PC-9 (cell line): ENCODE measurements at regions of chr7 and their contacts with region 1.

Region 1: DNA sequence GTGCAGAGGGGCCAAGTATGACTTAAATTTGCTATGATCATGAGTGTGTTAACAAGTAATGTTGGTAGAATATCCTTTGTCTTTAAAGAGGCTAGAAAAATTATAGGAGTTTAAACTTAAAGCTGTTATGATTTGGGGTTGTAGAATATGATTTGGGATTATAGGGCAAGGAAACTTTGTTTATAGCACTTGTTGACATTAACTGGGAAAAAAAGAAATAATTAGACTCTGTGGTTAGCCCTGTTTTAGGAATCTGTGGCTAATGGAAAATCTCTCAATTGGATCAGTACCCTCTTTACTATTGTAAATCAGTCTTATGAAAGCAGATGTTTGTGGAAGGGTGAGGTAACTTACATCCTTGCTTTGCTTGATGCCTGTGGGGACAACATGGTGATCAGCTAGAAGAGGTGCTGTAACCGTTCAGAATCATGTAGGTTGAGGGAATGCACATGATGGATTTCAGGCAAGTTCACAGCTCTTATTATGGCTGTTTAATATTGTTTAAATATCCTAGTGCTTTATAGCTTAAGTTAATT is 11.1 kb downstream of the ING3 start:
- DNase-seq: no peak
- H3K4me3 ChIP-seq: no peak overlapping the region
- H3K27ac ChIP-seq: no peak overlapping the region
- H3K4me1 ChIP-seq: no peaks in the 10 kb centered on the region
- H3K27me3 ChIP-seq: no peaks in the 10 kb centered on the region
- CTCF ChIP-seq: no peak

Region 2: GRCh38 chr7:120014920-120015465 is 946.7 kb before region 1 on chr7:
- CTCF ChIA-PET with region 1: no interaction called
- POLR2A ChIA-PET with region 1: no interaction called
- intact Hi-C with region 1: no loop called
- DNase-seq: no peak
- H3K4me3 ChIP-seq: no peak overlapping the region
- H3K27ac ChIP-seq: no peak overlapping the region
- H3K4me1 ChIP-seq: no peaks in the 10 kb centered on the region
- H3K27me3 ChIP-seq: no peaks in the 10 kb centered on the region
- CTCF ChIP-seq: no peak

Region 3: DNA sequence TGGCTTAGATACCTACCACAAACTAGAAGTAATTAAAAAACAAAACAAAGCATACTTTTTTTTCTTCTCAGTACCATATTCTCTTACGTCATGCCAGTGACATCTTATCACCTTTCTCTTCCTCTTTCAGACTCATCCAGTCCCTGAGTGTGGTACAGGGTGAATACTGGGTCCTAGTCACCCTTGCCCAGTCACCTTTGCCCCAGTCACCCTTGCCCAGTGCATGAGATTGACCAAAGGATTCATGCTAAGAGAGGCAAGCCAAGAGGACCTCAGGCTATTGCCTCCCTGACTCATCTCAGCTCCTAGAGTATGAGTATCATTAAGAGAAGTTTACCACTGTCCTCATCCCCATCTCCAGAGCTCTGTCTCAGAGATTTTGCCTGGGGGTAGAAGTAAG is 93.8 kb before region 1 on chr7:
- CTCF ChIA-PET with region 1: no interaction called
- POLR2A ChIA-PET with region 1: interaction called, 11 read pairs
- intact Hi-C with region 1: no loop called
- DNase-seq: peak in 1 of 2 experiments; percentile 61
- H3K4me3 ChIP-seq: no peak overlapping the region
- H3K27ac ChIP-seq: no peak overlapping the region
- H3K4me1 ChIP-seq: peaks cover 12% of the 10 kb centered on the region; the same call in 1 of the 2 replicates
- H3K27me3 ChIP-seq: no peaks in the 10 kb centered on the region
- CTCF ChIP-seq: no peak

Region 4: DNA sequence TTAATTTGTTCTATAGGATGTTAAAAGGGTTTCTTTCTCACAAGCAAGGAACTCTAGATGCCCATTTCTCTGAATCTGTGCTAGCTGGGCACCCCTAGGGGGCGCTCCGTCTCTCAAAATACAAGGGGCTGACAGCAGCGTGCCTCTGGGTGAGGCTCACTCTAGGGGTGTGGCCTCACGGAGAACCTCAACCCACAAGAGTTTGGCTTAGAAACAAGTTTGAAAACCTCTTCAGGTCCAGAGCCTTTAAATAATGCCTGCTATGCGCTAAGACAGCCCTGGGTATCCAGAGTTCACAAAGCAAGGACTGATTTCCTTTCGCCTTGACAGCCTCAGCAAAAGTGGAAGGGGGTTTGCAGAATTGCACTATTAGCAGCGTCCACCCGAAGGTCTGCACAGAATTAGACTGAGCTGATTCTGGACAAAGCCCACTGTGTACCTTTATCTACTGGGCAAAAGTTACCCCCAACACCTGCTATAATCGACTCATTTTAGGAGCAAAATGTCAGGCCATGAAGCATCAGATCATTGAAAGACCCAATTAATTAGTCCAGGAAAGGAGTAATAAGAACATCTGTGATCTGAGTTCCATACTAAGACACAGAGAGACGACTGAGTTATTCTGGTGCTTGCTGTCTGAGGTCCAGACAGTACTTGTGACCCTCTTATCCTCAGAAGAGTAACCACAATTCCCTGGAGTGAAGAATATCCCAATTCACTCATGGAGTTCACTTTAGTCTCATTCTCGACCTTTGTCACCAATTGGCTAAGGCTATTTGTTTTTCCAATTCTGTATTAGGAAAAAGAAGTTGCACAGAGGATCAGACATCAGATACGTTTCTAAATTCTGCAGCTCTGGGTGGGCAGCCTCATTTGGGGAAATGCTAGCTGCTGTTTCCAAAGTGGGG is 26.2 kb after region 1 on chr7:
- CTCF ChIA-PET with region 1: no interaction called
- POLR2A ChIA-PET with region 1: no interaction called
- intact Hi-C with region 1: no loop called
- DNase-seq: peak; percentile 74 to 85
- H3K4me3 ChIP-seq: peak overlapping the region; percentile 74
- H3K27ac ChIP-seq: no peak overlapping the region
- H3K4me1 ChIP-seq: peaks cover 10% of the 10 kb centered on the region
- H3K27me3 ChIP-seq: no peaks in the 10 kb centered on the region
- CTCF ChIP-seq: peak; percentile 95